ENCODE measurements at regions of chr17 and their contacts with region 1.

Region 1: DNA sequence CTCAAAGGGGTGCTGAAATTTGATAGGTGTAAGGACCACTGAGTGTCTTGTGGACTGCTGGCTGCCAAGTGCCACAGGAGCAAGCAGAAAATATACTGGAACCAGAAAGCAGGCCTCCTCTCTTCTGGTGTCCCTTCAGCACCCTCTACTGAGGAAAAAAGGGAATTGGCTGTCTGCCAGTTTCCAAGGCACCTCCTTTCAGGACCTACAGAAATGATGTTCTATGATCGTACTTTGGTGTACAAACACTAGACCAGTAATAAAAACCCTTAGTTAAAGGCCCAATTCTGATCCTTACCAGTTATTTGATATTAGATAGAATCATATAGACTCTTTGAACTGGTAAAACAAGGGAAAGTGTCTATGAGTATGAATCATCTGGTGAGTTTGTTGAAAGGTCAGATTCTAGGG is 35.8 kb upstream of the BCAS3 start:
- DNase-seq: no peak
- ATAC-seq: peak; percentile 78
- H3K4me3 ChIP-seq: no peak overlapping the region
- H3K27ac ChIP-seq: no peak overlapping the region
- H3K4me1 ChIP-seq: no peaks in the 10 kb centered on the region
- H3K27me3 ChIP-seq: no peaks in the 10 kb centered on the region
- CTCF ChIP-seq: peak; percentile 45 to 52 (median 49); a peak in 5 of 6 replicates
- EP300 ChIP-seq: no peak
- POLR2A ChIP-seq: no peak
- RAD21 ChIP-seq: peak; percentile 38; the same call in 1 of the 2 replicates

Region 2: DNA sequence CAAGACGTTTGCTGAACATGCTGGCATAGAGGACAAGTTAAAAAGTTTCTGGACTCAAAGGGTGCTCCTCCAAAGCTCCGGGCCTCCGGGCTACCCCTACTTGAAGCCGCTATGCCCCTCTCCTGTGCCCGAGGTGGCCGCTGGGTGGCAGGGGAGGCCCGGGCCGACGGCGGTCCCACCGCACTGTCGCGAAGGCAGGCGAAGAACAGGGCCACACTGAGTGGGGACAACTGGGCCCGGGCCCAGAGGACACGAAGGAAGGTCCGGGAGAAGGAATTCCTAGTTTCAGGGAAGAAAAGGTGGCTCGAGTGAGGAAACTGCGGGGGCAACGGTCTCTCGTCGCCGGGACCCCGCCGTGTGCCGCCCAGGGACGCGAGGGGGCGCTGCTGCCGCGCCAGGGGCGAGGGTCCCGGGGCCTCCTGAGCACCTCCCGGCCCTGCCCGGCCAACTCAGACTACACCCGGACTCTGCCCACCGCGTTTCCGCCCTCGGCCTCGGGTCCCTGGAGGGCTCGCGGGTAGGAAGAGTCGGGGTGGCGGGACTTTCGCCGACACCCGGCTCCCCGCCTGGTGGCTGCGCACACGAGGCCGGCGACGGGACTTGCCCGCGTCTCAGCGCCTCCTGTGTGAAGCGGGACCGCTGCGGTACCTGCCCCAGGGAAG is 220.4 kb before region 1 on chr17:
- CTCF ChIA-PET with region 1: interaction called, 3 read pairs
- POLR2A ChIA-PET with region 1: no interaction called
- RAD21 ChIA-PET with region 1: interaction called, 3 read pairs
- SMC1A ChIA-PET with region 1: no interaction called
- in situ Hi-C with region 1: loop called (anchors 5 kb)
- intact Hi-C with region 1: loop called (anchors 1 kb)
- DNase-seq: no peak
- ATAC-seq: peak; percentile 99
- H3K4me3 ChIP-seq: peak overlapping the region; percentile 61
- H3K27ac ChIP-seq: no peak overlapping the region
- H3K4me1 ChIP-seq: no peaks in the 10 kb centered on the region
- H3K27me3 ChIP-seq: no peaks in the 10 kb centered on the region
- CTCF ChIP-seq: peak; percentile 57 to 94 (median 90)
- EP300 ChIP-seq: no peak
- POLR2A ChIP-seq: peak; percentile 75
- RAD21 ChIP-seq: peak; percentile 64

Region 3: GRCh38 chr17:60568561-60568960 is 73.3 kb before region 1 on chr17:
- CTCF ChIA-PET with region 1: interaction called, 89 read pairs
- POLR2A ChIA-PET with region 1: no interaction called
- RAD21 ChIA-PET with region 1: interaction called, 6 read pairs
- SMC1A ChIA-PET with region 1: interaction called, 5 read pairs
- in situ Hi-C with region 1: no loop called
- intact Hi-C with region 1: no loop called
- DNase-seq: no peak
- ATAC-seq: no peak
- H3K4me3 ChIP-seq: no peak overlapping the region
- H3K27ac ChIP-seq: no peak overlapping the region
- H3K4me1 ChIP-seq: no peaks in the 10 kb centered on the region
- H3K27me3 ChIP-seq: no peaks in the 10 kb centered on the region; a peak in 1 of 4 replicates
- CTCF ChIP-seq: no peak
- EP300 ChIP-seq: no peak
- POLR2A ChIP-seq: no peak
- RAD21 ChIP-seq: no peak

Region 4: GRCh38 chr17:60599620-60600489 is 42.0 kb before region 1 on chr17 and contains the start of gene PPM1D:
- CTCF ChIA-PET with region 1: interaction called, 47 read pairs
- POLR2A ChIA-PET with region 1: no interaction called
- RAD21 ChIA-PET with region 1: interaction called, 4 read pairs
- SMC1A ChIA-PET with region 1: interaction called, 3 read pairs
- in situ Hi-C with region 1: no loop called
- intact Hi-C with region 1: loop called (anchors 2 kb)
- DNase-seq: peak; percentile 92
- ATAC-seq: peak; percentile 91
- H3K4me3 ChIP-seq: peak within 1 kb of the TSS; percentile 89
- H3K27ac ChIP-seq: peak within 1 kb of the TSS; percentile 87
- H3K4me1 ChIP-seq: no peaks in the 10 kb centered on the region
- H3K27me3 ChIP-seq: no peaks in the 10 kb centered on the region
- CTCF ChIP-seq: no peak
- EP300 ChIP-seq: no peak
- POLR2A ChIP-seq: peak; percentile 94
- RAD21 ChIP-seq: no peak
- polyA plus RNA-seq, gene PPM1D: 1.9 to 3.5 TPM

Region 5: DNA sequence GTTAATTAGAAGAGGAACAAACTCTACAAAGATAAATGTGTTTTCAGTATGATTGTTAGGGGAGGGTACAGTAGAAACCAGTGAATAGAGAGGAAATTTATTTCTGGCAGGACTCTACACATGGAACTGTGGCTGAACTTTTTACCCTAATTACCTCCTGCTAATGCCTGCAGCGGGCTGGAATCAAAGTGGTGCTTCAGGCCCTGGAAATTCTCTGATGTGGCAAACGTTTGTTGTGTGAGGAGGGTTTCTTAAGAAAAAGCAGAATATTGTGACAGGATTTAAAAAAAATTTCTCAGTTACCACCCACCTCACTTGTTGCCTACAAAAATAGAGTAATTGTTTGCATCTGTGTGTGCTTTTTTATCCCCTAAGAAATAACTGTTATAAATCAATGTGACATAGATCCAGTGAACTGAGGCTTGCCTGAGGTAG is 190.4 kb after region 1 on chr17:
- CTCF ChIA-PET with region 1: no interaction called
- POLR2A ChIA-PET with region 1: no interaction called
- RAD21 ChIA-PET with region 1: no interaction called
- SMC1A ChIA-PET with region 1: no interaction called
- in situ Hi-C with region 1: no loop called
- intact Hi-C with region 1: no loop called
- DNase-seq: no peak
- ATAC-seq: peak; percentile 29; the same call in 1 of the 3 replicates
- H3K4me3 ChIP-seq: no peak overlapping the region
- H3K27ac ChIP-seq: no peak overlapping the region
- H3K4me1 ChIP-seq: no peaks in the 10 kb centered on the region
- H3K27me3 ChIP-seq: no peaks in the 10 kb centered on the region
- CTCF ChIP-seq: no peak
- EP300 ChIP-seq: no peak
- POLR2A ChIP-seq: no peak
- RAD21 ChIP-seq: no peak

Measured in GM12878 (cell line).